Heart left ventricle (tissue), 16 donors: ENCODE measurements at regions of chr7 and their contacts with region 1.

Region 1: DNA sequence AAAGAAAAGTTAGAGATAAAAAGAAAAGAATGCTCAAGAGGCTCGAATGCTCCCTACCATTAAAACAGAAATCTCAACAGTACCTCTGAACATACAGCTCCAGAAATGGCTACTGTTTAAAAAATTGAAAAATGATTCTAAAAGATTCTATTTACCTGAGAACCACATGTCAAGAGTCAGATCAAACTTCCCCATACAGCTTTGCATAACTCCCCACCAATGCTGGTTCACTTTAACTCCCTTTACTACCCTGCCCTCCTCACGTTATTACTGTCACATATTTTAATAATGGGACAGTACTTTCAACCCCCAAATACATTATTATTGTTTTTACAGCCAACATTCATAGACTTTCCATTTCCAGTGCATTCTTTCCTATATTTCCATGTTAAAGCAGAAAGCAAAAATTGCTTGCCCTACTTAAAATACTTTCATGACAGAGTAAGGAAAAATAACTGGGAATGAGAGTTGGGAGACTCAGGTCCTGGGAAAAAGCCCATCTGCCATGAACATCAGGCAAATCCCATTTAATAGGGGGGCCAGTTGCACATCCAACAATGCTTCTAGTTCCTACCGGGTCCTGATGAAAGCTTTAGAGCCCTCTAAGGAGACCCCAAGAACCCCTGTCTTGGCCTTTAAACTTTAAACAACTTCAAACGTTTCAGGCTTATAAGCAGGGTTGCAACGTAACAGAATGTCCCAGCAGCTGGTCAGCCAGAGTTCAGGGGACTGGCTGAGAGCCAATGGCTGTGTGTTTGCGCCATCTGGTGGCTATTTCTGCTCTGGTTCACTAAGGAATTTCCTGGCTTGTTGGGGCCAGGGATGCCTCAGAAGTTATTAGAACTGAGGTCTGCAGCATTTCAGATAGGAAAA is 247.4 kb downstream of the ELMO1 start:
- DNase-seq: peak; percentile 80 to 85 (median 84)
- ATAC-seq: peak; percentile 83 to 90 (median 88)
- H3K4me3 ChIP-seq: no peak overlapping the region
- H3K27ac ChIP-seq: peak overlapping the region; percentile 4 to 82 (median 62)
- H3K4me1 ChIP-seq: peaks cover 0 to 48% (median 25%) of the 10 kb centered on the region in 12 donors
- H3K27me3 ChIP-seq: no peaks in the 10 kb centered on the region
- CTCF ChIP-seq: peak; percentile 77 to 93 (median 86)
- POLR2A ChIP-seq: no peak

Region 2: DNA sequence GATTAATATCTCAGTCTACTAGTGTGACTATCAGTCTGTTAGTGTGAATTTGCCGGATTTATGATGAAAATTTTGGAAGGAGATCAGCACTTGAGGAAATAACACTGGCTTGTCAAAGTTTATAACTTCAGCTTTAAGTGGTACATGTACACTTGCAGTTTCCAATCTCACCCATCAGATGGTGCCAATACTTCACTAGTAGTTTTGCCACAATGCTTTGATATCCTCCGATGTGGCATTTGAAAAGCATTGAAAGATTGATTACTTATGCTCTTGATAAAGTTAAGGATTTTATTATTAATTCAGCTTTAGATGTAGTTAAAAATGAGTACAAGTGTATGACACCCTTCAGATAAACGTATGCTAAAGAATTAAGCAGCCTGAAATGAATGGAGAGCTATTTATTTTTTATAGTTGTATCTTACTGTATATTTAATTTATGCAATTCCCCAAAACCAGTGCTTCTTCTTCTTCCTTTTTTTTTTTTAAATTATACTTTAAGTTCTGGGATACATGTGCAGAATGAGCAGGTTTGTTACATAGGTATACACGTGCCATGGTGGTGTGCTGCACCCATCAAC is 713.4 kb before region 1 on chr7:
- intact Hi-C with region 1: loop called in 9 of 10 experiments (anchors 5 kb)
- DNase-seq: no peak
- ATAC-seq: no peak
- H3K4me3 ChIP-seq: no peak overlapping the region
- H3K27ac ChIP-seq: no peak overlapping the region
- H3K4me1 ChIP-seq: no peaks in the 10 kb centered on the region
- H3K27me3 ChIP-seq: peaks cover 0 to under 1% (median 0%) of the 10 kb centered on the region in 9 donors
- CTCF ChIP-seq: peak; percentile 37 to 72 (median 58)
- POLR2A ChIP-seq: no peak

Region 3: GRCh38 chr7:36967387-36967786 is 233.9 kb before region 1 on chr7:
- intact Hi-C with region 1: loop called in 6 of 10 experiments (anchors 2 to 5 kb)
- DNase-seq: peak; percentile 59 to 67 (median 63)
- ATAC-seq: peak; percentile 85 to 94 (median 92)
- H3K4me3 ChIP-seq: no peak overlapping the region
- H3K27ac ChIP-seq: no peak overlapping the region
- H3K4me1 ChIP-seq: peaks cover 0 to 49% (median 7%) of the 10 kb centered on the region in 12 donors
- H3K27me3 ChIP-seq: no peaks in the 10 kb centered on the region
- CTCF ChIP-seq: peak; percentile 70 to 89 (median 84)
- POLR2A ChIP-seq: no peak

Region 4: DNA sequence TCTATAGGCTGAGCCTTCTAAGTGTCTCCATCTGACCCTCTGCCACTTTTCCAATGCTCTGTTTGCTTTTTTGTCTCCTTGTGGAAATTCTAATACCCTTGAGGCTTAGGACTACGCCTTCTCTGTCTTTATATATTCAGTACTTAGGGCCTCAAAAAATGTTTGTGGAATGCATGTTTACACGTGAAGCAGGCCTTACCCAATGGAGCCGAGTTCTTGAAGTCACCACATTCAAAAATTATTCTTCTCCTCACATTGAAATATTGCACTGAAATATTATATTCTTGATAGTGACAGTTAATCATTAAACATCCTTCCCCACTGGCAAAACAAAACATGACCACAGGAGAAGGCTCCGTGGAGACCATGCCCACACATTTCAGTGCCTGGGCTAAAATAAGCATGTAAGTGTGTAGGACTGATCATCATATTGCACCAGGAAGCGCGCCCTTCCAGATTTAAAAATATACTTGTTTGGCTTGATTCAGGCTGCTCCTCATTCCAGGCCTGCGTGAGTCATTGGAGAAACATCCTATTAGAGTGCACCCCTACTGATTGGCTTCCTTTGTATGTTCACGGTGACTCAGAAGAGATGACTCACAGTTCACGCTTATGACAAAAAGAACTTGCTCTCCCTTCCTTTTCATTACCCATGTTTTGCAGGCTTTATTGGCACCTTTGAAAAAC is 169.5 kb before region 1 on chr7:
- intact Hi-C with region 1: loop called in 1 of 10 experiments (anchors 5 kb)
- DNase-seq: peak in 4 of 5 donors; percentile 73 to 86 (median 81)
- ATAC-seq: peak; percentile 99 to 100 (median 100)
- H3K4me3 ChIP-seq: no peak overlapping the region
- H3K27ac ChIP-seq: peak overlapping the region; percentile 18 to 82 (median 72)
- H3K4me1 ChIP-seq: peaks cover 8 to 32% (median 18%) of the 10 kb centered on the region in 12 donors
- H3K27me3 ChIP-seq: no peaks in the 10 kb centered on the region
- CTCF ChIP-seq: no peak
- POLR2A ChIP-seq: no peak